Endothelial cell of umbilical vein (primary cell): ENCODE measurements at regions of chr20 and their contacts with region 1.

Region 1: GRCh38 chr20:58603721-58604120 is 47.4 kb upstream of the STX16 start:
- DNase-seq: no peak
- H3K4me3 ChIP-seq: no peak overlapping the region
- H3K27ac ChIP-seq: no peak overlapping the region
- H3K4me1 ChIP-seq: no peaks in the 10 kb centered on the region
- H3K27me3 ChIP-seq: peaks cover 0 to 1% of the 10 kb centered on the region in 2 experiments
- CTCF ChIP-seq: no peak
- POLR2A ChIP-seq: no peak

Region 2: DNA sequence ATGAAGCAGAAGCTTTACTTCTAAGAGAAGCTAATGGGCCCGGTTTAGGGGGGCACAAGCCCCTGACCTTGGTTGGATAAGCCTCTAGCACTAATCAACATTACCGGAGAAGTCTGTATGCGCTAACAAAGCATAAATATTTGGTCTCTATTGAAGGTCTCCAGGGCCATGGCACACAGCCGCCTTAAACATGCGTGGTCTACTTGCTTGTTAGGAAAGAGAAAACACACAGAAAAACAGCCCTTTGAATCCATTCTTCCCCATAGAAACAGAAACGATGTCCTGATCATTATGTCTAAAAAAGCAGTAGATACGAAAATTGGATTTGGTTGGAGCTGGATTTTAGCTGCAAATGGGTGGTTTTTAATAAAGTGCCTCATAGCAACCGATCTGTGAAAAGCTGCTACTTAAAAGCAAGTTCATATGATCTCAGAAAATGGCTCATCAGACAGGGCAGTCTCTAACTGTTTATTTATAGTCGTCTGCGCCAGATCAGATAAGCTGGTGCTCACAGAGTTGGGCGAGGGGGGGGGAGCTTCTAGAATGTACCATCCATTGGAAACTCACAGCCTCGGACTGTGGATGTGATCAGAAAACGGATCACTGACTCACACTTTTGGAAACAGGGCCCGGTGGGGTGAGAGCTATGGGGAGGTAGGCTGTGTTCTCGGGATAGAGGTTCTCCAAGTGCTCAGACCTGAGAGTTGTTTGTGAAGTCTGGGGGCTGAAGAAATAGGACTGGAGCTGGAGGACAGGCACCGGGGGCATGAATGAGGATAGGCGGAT is 53.3 kb before region 1 on chr20:
- CTCF ChIA-PET with region 1: interaction called, 3 read pairs
- POLR2A ChIA-PET with region 1: no interaction called
- dilution Hi-C with region 1: no loop called
- intact Hi-C with region 1: loop called (anchors 5 kb)
- DNase-seq: peak; percentile 86
- H3K4me3 ChIP-seq: no peak overlapping the region
- H3K27ac ChIP-seq: peak overlapping the region; percentile 2
- H3K4me1 ChIP-seq: peaks cover 39% of the 10 kb centered on the region
- H3K27me3 ChIP-seq: no peaks in the 10 kb centered on the region
- CTCF ChIP-seq: no peak
- POLR2A ChIP-seq: no peak

Region 3: GRCh38 chr20:58623826-58624473 is 20.2 kb after region 1 on chr20:
- CTCF ChIA-PET with region 1: no interaction called
- POLR2A ChIA-PET with region 1: no interaction called
- dilution Hi-C with region 1: no loop called
- intact Hi-C with region 1: no loop called
- DNase-seq: peak; percentile 93
- H3K4me3 ChIP-seq: no peak overlapping the region
- H3K27ac ChIP-seq: peak overlapping the region; percentile 76
- H3K4me1 ChIP-seq: peaks cover 29% of the 10 kb centered on the region
- H3K27me3 ChIP-seq: no peaks in the 10 kb centered on the region
- CTCF ChIP-seq: no peak
- POLR2A ChIP-seq: peak; percentile 48

Region 4: DNA sequence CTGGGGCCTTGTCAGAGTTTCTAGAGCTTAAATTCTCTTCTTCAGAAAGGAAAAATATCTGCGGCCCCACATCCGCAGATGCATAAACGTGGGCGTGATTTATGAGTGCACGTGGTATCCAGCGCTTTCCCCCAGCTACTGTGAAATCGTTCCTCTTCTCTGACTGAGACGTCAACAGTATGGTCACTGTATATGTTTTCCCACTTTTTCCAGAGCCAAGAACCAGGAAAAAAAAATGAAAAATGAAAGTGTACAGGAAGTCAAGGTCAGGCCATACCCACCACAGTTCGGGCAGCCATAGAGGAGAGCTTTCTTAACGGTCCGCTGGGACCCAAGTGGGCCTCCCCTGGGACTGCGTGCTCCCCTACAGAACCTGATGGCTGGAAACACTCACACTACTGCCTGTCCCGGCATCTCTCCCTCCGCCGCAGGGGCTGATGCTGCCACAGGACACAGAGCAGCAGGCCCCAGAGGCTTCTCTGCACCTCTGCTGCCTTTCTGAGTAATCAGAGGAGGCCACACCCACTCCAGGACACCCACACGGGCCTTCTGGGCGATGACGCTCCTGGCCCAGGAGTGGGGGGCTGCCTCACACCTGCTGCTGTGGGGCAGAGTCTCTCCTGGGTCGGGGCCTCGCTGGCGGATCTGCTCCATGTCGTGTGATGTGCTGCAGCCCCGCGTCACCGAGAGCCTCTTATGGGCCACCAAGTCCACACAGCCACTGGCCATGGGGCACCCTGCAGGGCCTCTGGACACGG is 31.0 kb after region 1 on chr20:
- CTCF ChIA-PET with region 1: no interaction called
- POLR2A ChIA-PET with region 1: no interaction called
- dilution Hi-C with region 1: no loop called
- intact Hi-C with region 1: no loop called
- DNase-seq: peak; percentile 79
- H3K4me3 ChIP-seq: no peak overlapping the region
- H3K27ac ChIP-seq: no peak overlapping the region
- H3K4me1 ChIP-seq: peaks cover 15% of the 10 kb centered on the region
- H3K27me3 ChIP-seq: peaks cover 3 to 5% of the 10 kb centered on the region in 2 experiments
- CTCF ChIP-seq: no peak
- POLR2A ChIP-seq: no peak

Region 5: GRCh38 chr20:58651946-58652605 is 48.4 kb after region 1 on chr20:
- CTCF ChIA-PET with region 1: no interaction called
- POLR2A ChIA-PET with region 1: no interaction called
- dilution Hi-C with region 1: no loop called
- intact Hi-C with region 1: no loop called
- DNase-seq: peak; percentile 74
- H3K4me3 ChIP-seq: peak overlapping the region; percentile 86 to 93 (median 89)
- H3K27ac ChIP-seq: peak overlapping the region; percentile 81
- H3K4me1 ChIP-seq: peaks cover 37% of the 10 kb centered on the region
- H3K27me3 ChIP-seq: no peaks in the 10 kb centered on the region
- CTCF ChIP-seq: no peak
- POLR2A ChIP-seq: peak; percentile 75

Region 6: GRCh38 chr20:59453759-59454560 is 850.2 kb after region 1 on chr20:
- CTCF ChIA-PET with region 1: no interaction called
- POLR2A ChIA-PET with region 1: no interaction called
- dilution Hi-C with region 1: no loop called
- intact Hi-C with region 1: no loop called
- DNase-seq: no peak
- H3K4me3 ChIP-seq: no peak overlapping the region
- H3K27ac ChIP-seq: no peak overlapping the region
- H3K4me1 ChIP-seq: no peaks in the 10 kb centered on the region
- H3K27me3 ChIP-seq: no peaks in the 10 kb centered on the region
- CTCF ChIP-seq: no peak
- POLR2A ChIP-seq: no peak